ENCODE measurements at regions of chr3 and their contacts with region 1.

Region 1: GRCh38 chr3:184289426-184289938 is 9.6 kb upstream of the PSMD2 start:
- DNase-seq: peak; percentile 52
- H3K4me3 ChIP-seq: no peak overlapping the region
- H3K27ac ChIP-seq: no peak overlapping the region
- H3K4me1 ChIP-seq: no peaks in the 10 kb centered on the region
- H3K27me3 ChIP-seq: no peaks in the 10 kb centered on the region
- CTCF ChIP-seq: peak; percentile 48

Region 2: DNA sequence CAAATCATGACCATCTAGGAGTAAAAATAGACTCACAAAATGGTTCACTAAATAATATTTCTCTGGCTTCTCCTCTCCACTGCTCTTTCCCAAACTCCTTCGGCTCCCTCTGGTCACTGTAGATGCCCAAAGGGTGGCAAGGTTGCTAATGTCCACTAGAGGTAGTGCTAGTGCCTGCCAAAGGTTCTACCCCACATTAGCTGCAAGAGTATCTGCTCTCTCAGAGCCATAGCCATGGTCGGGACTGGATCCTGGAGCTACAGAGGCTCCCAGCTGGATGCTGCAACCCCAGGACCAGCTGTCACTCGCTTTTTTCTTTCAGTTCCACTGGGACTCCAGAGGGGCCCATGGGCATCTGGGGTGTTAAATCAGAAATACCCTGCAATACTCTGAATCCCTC is 249.5 kb before region 1 on chr3:
- intact Hi-C with region 1: loop called (anchors 10 kb)
- DNase-seq: no peak
- H3K4me3 ChIP-seq: no peak overlapping the region
- H3K27ac ChIP-seq: no peak overlapping the region
- H3K4me1 ChIP-seq: no peaks in the 10 kb centered on the region
- H3K27me3 ChIP-seq: no peaks in the 10 kb centered on the region
- CTCF ChIP-seq: no peak